ENCODE measurements at regions of chr1 and their contacts with region 1.

Region 1: GRCh38 chr1:179809506-179810366 is 66.6 kb downstream of the FAM163A start:
- DNase-seq: peak; percentile 75
- ATAC-seq: peak; percentile 75
- H3K4me3 Mint-ChIP-seq: no peak overlapping the region
- H3K27ac Mint-ChIP-seq: no peak overlapping the region
- H3K4me1 Mint-ChIP-seq: no peaks in the 10 kb centered on the region
- H3K27me3 Mint-ChIP-seq: peaks cover 6% of the 10 kb centered on the region
- CTCF ChIP-seq: peak; percentile 95

Region 2: GRCh38 chr1:179447489-179447888 is 362.2 kb before region 1 on chr1:
- CTCF ChIA-PET with region 1: interaction called, 12 read pairs
- POLR2A ChIA-PET with region 1: no interaction called
- DNase-seq: peak; percentile 30
- ATAC-seq: peak; percentile 77
- H3K4me3 Mint-ChIP-seq: no peak overlapping the region
- H3K27ac Mint-ChIP-seq: no peak overlapping the region
- H3K4me1 Mint-ChIP-seq: no peaks in the 10 kb centered on the region
- H3K27me3 Mint-ChIP-seq: no peaks in the 10 kb centered on the region; the same call in 1 of the 2 replicates
- CTCF ChIP-seq: no peak

Region 3: DNA sequence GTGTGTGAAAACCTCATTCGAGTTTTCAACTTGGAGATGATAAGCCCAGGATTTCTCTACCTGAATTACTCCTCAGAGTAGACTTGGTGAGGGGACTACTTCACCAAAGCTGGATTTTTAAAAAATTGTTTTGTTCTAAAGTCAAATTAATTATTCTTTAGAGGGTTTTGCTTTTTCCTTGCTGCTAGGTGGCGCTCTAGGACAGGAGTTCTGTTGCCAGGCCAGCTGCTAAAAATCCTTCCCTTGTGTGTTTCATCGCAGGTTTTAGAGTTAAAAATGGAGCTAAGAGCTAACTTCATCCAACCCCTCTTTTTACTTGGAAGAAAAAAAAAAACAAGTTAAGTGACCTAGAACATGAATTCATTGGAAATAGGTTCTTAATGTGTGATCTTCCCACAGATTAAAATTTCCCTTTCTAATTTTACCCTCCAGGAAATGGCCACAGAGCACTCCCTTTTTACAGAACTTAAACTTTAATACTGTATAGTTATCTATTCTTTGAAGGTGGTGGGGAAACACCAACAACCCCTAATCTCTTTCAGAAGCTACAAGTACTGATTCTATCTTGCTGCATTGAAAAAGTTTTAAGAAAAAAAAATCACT is 103.3 kb before region 1 on chr1:
- CTCF ChIA-PET with region 1: interaction called, 914 read pairs
- POLR2A ChIA-PET with region 1: interaction called, 9 read pairs
- DNase-seq: peak; percentile 53
- ATAC-seq: peak; percentile 41; the same call in 1 of the 2 replicates
- H3K4me3 Mint-ChIP-seq: no peak overlapping the region
- H3K27ac Mint-ChIP-seq: no peak overlapping the region
- H3K4me1 Mint-ChIP-seq: no peaks in the 10 kb centered on the region
- H3K27me3 Mint-ChIP-seq: no peaks in the 10 kb centered on the region
- CTCF ChIP-seq: peak; percentile 68

Region 4: DNA sequence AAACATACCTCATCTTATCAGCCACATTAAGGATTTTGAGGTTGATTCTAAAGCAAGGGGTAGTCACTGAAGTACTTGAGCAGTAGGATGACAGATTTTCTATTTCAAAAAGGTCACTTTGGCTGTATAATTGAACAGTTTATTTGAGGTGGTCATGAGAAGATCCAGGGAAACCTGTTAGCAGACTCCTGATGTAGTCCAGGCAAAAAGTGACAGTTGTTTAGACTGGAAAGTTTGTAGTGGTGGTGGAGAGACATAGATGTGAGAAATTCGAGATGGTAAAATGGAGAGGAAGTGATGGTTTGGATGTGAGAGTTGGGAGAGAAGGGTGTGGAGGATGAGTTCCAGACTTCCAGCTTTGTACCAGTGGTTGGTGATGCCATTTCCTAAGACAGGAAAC is 59.1 kb before region 1 on chr1:
- CTCF ChIA-PET with region 1: interaction called, 13 read pairs
- POLR2A ChIA-PET with region 1: no interaction called
- DNase-seq: no peak
- ATAC-seq: no peak
- H3K4me3 Mint-ChIP-seq: no peak overlapping the region
- H3K27ac Mint-ChIP-seq: no peak overlapping the region
- H3K4me1 Mint-ChIP-seq: no peaks in the 10 kb centered on the region
- H3K27me3 Mint-ChIP-seq: peaks cover 29% of the 10 kb centered on the region
- CTCF ChIP-seq: no peak

Region 5: DNA sequence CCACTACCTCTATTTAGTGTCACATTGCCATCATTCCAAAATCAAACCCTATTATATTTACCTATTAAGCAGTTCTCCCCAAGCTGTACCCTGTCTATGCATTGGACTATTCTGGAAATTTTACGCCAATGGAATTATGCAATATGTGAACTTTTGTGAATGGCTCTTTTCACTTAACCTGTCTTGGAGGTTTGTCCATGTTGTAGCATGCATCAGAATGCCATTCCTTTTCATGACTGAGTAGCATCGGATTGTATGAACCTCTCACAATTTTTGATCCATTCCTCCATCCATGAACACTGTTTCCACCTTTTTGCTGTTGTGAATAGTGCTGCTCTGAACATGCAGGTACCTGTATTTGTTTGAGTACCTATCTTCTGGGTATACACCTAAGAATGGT is 32.9 kb before region 1 on chr1:
- CTCF ChIA-PET with region 1: interaction called, 35 read pairs
- POLR2A ChIA-PET with region 1: no interaction called
- DNase-seq: no peak
- ATAC-seq: no peak
- H3K4me3 Mint-ChIP-seq: no peak overlapping the region
- H3K27ac Mint-ChIP-seq: no peak overlapping the region
- H3K4me1 Mint-ChIP-seq: peaks cover 3% of the 10 kb centered on the region; the same call in 1 of the 2 replicates
- H3K27me3 Mint-ChIP-seq: no peaks in the 10 kb centered on the region
- CTCF ChIP-seq: no peak

Region 6: GRCh38 chr1:179824265-179824664 is 14.5 kb after region 1 on chr1:
- CTCF ChIA-PET with region 1: interaction called, 37 read pairs
- POLR2A ChIA-PET with region 1: no interaction called
- DNase-seq: no peak
- ATAC-seq: no peak; the same call in 1 of the 2 replicates
- H3K4me3 Mint-ChIP-seq: no peak overlapping the region
- H3K27ac Mint-ChIP-seq: no peak overlapping the region
- H3K4me1 Mint-ChIP-seq: peaks cover 13% of the 10 kb centered on the region
- H3K27me3 Mint-ChIP-seq: no peaks in the 10 kb centered on the region; the same call in none of the 2 replicates
- CTCF ChIP-seq: no peak

Region 7: DNA sequence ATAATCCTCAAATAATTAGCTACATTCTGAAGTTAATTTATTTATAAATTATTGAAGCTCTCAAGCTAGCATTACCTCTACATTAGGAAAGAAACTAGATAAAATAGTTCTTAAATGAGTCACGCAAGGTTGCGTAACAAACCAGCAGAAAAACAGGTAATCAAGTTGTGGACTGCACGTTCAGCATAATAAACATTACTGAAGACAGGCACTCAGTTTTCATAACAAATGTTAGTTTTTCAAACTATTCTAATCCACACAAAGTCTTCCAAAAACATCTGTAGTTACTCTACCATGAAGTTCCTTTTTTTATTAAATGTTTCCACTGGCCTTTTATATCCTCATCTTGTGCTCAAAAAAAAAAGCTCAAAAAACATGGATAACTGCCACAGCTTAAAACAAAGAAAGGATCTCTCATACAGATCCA is 66.6 kb after region 1 on chr1:
- CTCF ChIA-PET with region 1: no interaction called
- POLR2A ChIA-PET with region 1: no interaction called
- DNase-seq: no peak
- ATAC-seq: no peak
- H3K4me3 Mint-ChIP-seq: peak overlapping the region; percentile 87
- H3K27ac Mint-ChIP-seq: no peak overlapping the region
- H3K4me1 Mint-ChIP-seq: peaks cover 19% of the 10 kb centered on the region
- H3K27me3 Mint-ChIP-seq: no peaks in the 10 kb centered on the region
- CTCF ChIP-seq: no peak

Region 8: GRCh38 chr1:179910934-179911333 is 101.2 kb after region 1 on chr1:
- CTCF ChIA-PET with region 1: no interaction called
- POLR2A ChIA-PET with region 1: no interaction called
- DNase-seq: no peak
- ATAC-seq: no peak
- H3K4me3 Mint-ChIP-seq: no peak overlapping the region
- H3K27ac Mint-ChIP-seq: no peak overlapping the region
- H3K4me1 Mint-ChIP-seq: no peaks in the 10 kb centered on the region
- H3K27me3 Mint-ChIP-seq: no peaks in the 10 kb centered on the region
- CTCF ChIP-seq: no peak

Region 9: GRCh38 chr1:179938752-179939151 is 129.0 kb after region 1 on chr1:
- CTCF ChIA-PET with region 1: no interaction called
- POLR2A ChIA-PET with region 1: no interaction called
- DNase-seq: no peak
- ATAC-seq: no peak
- H3K4me3 Mint-ChIP-seq: no peak overlapping the region
- H3K27ac Mint-ChIP-seq: no peak overlapping the region
- H3K4me1 Mint-ChIP-seq: no peaks in the 10 kb centered on the region
- H3K27me3 Mint-ChIP-seq: no peaks in the 10 kb centered on the region
- CTCF ChIP-seq: no peak

Region 10: DNA sequence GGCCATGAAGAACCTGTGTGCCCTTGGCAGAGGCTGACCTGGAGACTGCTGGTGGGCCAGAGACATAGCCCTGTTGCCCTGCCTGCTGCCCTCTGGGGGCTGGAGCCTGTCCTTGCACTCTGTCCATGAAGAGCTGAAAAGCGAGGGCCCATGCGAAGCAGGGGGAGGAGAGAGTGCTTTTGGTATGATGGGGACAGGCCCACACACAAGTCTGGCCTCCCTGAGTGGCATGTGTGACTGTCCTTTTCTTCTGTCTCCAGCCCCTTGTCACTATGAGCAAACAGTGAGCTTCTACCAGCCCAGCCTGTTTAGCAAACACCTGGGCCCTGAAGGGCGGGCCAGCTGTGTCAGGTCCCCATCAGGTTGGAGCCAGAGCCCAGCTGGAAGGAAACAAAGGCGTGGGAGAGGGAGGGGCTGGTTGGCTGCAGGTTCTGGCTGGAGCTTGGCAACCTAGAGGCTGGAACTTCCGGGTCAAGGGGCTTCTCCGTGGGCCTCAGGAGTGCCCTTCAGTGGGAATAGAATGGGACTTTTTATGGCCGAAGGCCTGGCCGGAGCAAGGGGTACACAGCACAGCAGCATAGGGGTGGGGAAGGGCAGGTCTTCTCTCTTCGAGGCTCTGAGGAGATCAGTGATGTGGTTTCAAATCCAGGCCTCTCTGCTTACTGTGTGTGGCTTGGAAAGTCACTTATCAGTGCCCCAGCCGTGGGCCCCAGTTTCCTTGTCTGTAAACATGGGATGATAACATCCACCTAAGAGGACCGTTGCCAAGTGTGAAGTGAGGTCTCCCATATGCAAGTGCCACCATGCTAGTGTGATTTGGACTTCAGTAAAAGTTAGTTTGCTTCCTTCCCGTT is 359.3 kb after region 1 on chr1:
- CTCF ChIA-PET with region 1: interaction called, 13 read pairs
- POLR2A ChIA-PET with region 1: no interaction called
- DNase-seq: peak; percentile 80
- ATAC-seq: peak; percentile 77
- H3K4me3 Mint-ChIP-seq: no peak overlapping the region
- H3K27ac Mint-ChIP-seq: peak overlapping the region; percentile 95
- H3K4me1 Mint-ChIP-seq: peaks cover 52% of the 10 kb centered on the region
- H3K27me3 Mint-ChIP-seq: no peaks in the 10 kb centered on the region
- CTCF ChIP-seq: peak; percentile 56